AG04450 (cell line): ENCODE measurements at regions of chr1 and their contacts with region 1.

Region 1: GRCh38 chr1:113072757-113073478 is at the start of gene LRIG2:
- DNase-seq: peak; percentile 92
- H3K4me3 ChIP-seq: peak within 1 kb of the TSS; percentile 99
- H3K27ac ChIP-seq: peak within 1 kb of the TSS; percentile 86
- H3K27me3 ChIP-seq: no peaks in the 10 kb centered on the region
- CTCF ChIP-seq: peak; percentile 88
- polyA plus RNA-seq, gene LRIG2: 7.9 and 9.7 TPM in 2 replicates

Region 2: DNA sequence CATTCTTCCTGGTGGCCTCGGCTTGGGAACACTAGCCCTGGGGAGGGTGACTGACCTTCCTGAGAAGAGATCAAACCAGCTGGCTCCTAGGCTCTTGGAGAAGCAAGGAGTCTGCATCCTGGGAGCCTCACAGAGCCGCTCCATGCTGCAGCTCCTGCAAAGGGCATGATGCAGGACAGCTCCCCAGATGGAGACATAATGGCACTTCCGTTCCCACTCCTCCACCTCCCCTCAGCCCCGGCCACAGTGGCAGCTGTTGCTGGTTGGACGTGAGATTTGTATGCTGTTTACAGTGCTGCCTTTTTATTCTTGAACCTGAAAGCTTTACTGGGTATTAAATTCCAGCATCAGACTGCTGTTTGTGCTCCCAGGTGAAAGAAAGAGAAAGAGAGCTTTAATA is 760.6 kb before region 1 on chr1:
- CTCF ChIA-PET with region 1: no interaction called
- POLR2A ChIA-PET with region 1: no interaction called
- DNase-seq: no peak
- H3K4me3 ChIP-seq: no peak overlapping the region
- H3K27ac ChIP-seq: no peak overlapping the region
- H3K27me3 ChIP-seq: peaks cover 23% of the 10 kb centered on the region
- CTCF ChIP-seq: no peak

Region 3: DNA sequence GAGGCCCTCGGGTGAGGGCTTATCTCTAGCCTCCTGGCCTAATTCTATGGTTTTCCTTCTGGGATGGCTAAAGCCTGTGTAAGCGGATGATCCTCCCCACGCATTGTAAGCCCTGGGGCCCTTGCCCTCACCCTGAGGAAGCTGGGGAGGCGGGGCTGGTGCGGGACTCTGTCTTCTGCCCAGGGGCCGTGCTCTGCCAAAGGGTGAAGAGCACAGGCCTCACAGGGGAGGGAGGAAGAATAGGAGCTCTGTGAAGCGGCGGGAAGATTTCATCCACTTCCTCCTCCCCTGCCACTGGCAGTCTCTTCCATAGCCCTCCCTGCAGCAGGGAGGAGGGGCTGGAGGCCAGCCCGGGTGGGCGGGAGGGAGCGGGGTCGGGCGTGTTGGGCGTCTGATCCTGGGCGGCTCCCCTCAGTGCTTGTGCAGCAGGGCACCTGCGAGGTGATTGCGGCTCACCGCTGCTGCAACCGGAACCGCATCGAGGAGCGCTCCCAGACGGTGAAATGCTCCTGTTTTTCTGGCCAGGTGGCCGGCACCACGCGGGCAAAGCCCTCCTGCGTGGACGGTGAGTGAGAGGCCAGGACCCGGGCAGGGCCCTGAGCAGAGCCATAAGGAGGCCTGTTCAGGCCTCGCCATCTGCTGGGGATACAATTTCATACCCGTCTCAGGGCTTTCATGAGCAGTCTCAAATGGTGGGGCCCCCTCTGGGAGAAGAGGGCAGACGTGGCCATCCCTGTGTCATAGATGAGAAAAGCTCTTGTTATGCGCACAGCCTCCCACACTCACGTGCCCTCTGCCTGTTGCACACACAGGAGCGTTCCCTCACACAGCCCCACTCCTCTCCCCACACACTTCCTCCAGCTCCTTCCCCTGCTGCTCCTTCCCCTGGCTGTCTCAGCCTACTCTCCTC is 350.1 kb before region 1 on chr1:
- CTCF ChIA-PET with region 1: interaction called, 90 read pairs
- POLR2A ChIA-PET with region 1: no interaction called
- DNase-seq: no peak
- H3K4me3 ChIP-seq: no peak overlapping the region
- H3K27ac ChIP-seq: peak overlapping the region; percentile 31
- H3K27me3 ChIP-seq: no peaks in the 10 kb centered on the region
- CTCF ChIP-seq: 0 out of 2 replicates have a peak, but pooled peaks have one; percentile 11

Region 4: GRCh38 chr1:112818990-112819689 is 253.8 kb before region 1 on chr1:
- CTCF ChIA-PET with region 1: interaction called, 29 read pairs
- POLR2A ChIA-PET with region 1: no interaction called
- DNase-seq: peak; percentile 39
- H3K4me3 ChIP-seq: no peak overlapping the region
- H3K27ac ChIP-seq: no peak overlapping the region
- H3K27me3 ChIP-seq: no peaks in the 10 kb centered on the region
- CTCF ChIP-seq: no peak

Region 5: GRCh38 chr1:112904071-112904830 is 168.7 kb before region 1 on chr1:
- CTCF ChIA-PET with region 1: interaction called, 11 read pairs
- POLR2A ChIA-PET with region 1: no interaction called
- DNase-seq: peak; percentile 58
- H3K4me3 ChIP-seq: no peak overlapping the region
- H3K27ac ChIP-seq: no peak overlapping the region
- H3K27me3 ChIP-seq: no peaks in the 10 kb centered on the region
- CTCF ChIP-seq: no peak

Region 6: GRCh38 chr1:113042285-113043143 is 30.4 kb before region 1 on chr1:
- CTCF ChIA-PET with region 1: interaction called, 40 read pairs
- POLR2A ChIA-PET with region 1: no interaction called
- DNase-seq: peak; percentile 46
- H3K4me3 ChIP-seq: no peak overlapping the region
- H3K27ac ChIP-seq: peak overlapping the region; percentile 86
- H3K27me3 ChIP-seq: no peaks in the 10 kb centered on the region
- CTCF ChIP-seq: peak; percentile 61

Region 7: DNA sequence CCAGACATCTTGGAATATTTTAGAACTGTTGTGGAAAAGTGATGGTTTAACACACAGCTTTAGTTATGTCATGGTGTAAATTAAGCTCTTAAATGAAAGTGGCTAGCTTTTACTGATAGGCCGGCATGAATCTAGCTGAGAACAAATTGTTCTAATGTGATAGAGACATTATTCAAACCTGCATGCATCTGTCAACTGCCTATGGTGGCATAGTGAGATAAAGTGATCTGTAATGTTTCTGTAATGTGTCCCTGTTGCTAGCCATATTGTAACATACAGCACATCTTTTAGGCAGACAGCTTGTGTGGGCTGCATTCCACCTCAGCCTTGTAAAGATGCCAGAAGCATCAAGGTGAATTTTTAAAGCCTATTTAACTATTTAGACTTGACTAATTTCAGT is 16.1 kb after region 1 on chr1:
- CTCF ChIA-PET with region 1: interaction called, 65 read pairs
- POLR2A ChIA-PET with region 1: no interaction called
- DNase-seq: no peak
- H3K4me3 ChIP-seq: no peak overlapping the region
- H3K27ac ChIP-seq: no peak overlapping the region
- H3K27me3 ChIP-seq: no peaks in the 10 kb centered on the region
- CTCF ChIP-seq: no peak

Region 8: GRCh38 chr1:113684153-113684541 is 611.2 kb after region 1 on chr1:
- CTCF ChIA-PET with region 1: interaction called, 12 read pairs
- POLR2A ChIA-PET with region 1: no interaction called
- DNase-seq: peak; percentile 52
- H3K4me3 ChIP-seq: no peak overlapping the region
- H3K27ac ChIP-seq: no peak overlapping the region
- H3K27me3 ChIP-seq: no peaks in the 10 kb centered on the region
- CTCF ChIP-seq: no peak